K562 (cell line): ENCODE measurements at regions of chr1 and their contacts with region 1.

Region 1: GRCh38 chr1:234978397-234979295 is 150.0 kb downstream of the TOMM20 start:
- DNase-seq: peak; percentile 60 to 84 (median 78)
- ATAC-seq: peak; percentile 16
- H3K4me3 ChIP-seq: no peak overlapping the region
- H3K27ac ChIP-seq: peak overlapping the region; percentile 2; the same call in 1 of the 3 replicates
- H3K4me1 ChIP-seq: peaks cover 49 to 85% of the 10 kb centered on the region in 2 experiments
- H3K27me3 ChIP-seq: no peaks in the 10 kb centered on the region
- CTCF ChIP-seq: peak in 2 of 3 experiments; percentile 10 to 41; a peak in 3 of 6 replicates
- EP300 ChIP-seq: peak; percentile 81
- POLR2A ChIP-seq: no peak
- RAD21 ChIP-seq: peak; percentile 39 to 57

Region 2: GRCh38 chr1:234955107-234955731 is 23.4 kb before region 1 on chr1:
- CTCF ChIA-PET with region 1: no interaction called
- POLR2A ChIA-PET with region 1: interaction called, 11 read pairs
- in situ Hi-C with region 1: no loop called
- intact Hi-C with region 1: no loop called
- DNase-seq: peak in 2 of 4 experiments; percentile 37 to 62
- ATAC-seq: peak; percentile 18; the same call in 2 of the 3 replicates
- H3K4me3 ChIP-seq: no peak overlapping the region
- H3K27ac ChIP-seq: peak overlapping the region; percentile 31; the same call in 2 of the 3 replicates
- H3K4me1 ChIP-seq: peaks cover 36 to 51% of the 10 kb centered on the region in 2 experiments
- H3K27me3 ChIP-seq: no peaks in the 10 kb centered on the region
- CTCF ChIP-seq: no peak
- EP300 ChIP-seq: no peak
- POLR2A ChIP-seq: no peak
- RAD21 ChIP-seq: peak; percentile 7 to 42; a peak in 2 of 4 replicates

Region 3: DNA sequence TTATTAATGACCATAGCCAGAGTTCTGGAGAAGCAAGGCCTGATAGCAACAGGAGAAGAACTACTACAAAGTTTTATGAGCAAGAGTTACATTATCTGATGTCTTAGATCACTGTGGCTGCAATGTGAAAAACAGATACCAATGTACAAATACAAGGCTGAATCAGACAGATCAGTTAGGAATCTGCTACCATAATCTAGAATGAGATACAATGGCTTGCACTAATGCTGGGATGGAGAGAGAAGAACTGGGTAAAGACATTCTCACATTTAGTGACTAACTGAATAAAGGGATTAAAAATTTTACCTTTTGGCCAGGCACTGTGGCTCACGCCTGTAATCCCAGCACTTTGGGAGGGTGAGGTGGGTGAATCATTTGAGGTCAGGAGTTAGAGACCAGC is 308.0 kb after region 1 on chr1:
- CTCF ChIA-PET with region 1: no interaction called
- POLR2A ChIA-PET with region 1: no interaction called
- in situ Hi-C with region 1: no loop called
- intact Hi-C with region 1: no loop called
- DNase-seq: no peak
- ATAC-seq: no peak
- H3K4me3 ChIP-seq: no peak overlapping the region
- H3K27ac ChIP-seq: no peak overlapping the region
- H3K4me1 ChIP-seq: peaks cover 13 to 30% of the 10 kb centered on the region in 2 experiments
- H3K27me3 ChIP-seq: no peaks in the 10 kb centered on the region
- CTCF ChIP-seq: no peak
- EP300 ChIP-seq: no peak
- POLR2A ChIP-seq: no peak
- RAD21 ChIP-seq: no peak